ENCODE measurements at regions of chr16 and their contacts with region 1.

Region 1: DNA sequence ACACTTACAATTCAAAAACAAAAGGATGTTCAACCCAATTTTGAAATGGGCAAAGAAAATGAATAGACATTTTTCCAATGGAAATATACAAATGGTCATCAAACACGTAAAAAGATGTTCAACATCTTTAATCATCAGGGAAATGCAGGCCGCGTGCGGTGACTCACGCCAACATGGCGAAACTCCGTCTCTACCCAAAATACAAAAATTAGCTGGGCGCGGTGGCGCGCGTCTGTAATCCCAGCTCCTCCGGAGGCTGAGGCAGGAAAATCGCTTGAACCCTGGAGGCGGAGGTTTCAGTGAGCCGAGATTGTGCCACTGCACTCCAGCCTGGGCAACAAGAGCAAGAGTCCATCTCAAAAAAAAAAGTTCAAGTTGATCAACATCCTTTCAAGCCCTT is 1.8 kb upstream of the CLUAP1 start:
- DNase-seq: no peak
- ATAC-seq: no peak

Region 2: DNA sequence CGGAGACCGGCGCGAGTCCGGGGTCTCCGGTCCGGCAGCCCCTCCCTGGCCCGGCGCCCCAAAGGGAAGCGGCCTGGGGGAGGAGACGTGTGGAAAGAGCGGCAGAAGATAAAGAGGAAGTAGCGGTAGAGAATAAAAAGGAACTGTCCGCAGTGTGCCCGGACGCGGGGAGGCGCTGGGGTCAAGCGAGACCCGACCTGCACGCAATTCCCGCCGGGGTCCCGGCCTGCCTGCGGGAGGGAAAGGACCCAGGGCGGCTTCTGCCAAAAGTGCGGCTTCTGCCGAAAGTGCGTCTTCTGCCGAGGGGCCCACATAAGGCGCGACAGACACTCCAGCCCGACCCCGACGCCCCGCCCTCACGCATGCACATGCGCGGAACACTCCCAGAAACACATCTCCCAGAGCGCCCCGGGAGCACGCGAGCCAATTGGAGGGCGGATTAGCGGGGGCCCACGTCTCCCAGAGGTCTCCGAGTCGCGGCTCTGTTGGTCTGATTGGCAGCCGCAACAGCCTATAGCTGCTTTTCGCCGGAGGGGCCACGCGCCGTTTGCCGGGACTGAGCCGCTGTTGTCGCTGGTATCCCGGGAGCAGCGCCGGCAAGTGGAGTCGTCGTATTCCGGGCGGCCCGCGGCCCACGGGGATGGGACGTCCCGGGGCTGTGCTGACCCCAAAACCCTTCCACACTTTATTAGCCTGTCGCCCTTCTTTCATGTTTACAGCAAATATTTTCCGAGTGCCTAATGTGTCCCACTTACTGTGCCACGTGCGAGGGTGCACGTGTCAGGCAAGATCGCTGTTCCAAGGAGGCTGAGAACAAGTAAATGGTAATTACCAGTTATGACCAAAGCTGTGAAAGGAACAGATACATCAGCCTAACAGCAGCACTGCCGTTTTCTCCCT is 234.6 kb before region 1 on chr16:
- intact Hi-C with region 1: loop called in 1 of 2 experiments (anchors 5 kb)
- DNase-seq: peak; percentile 98
- ATAC-seq: peak; percentile 97 to 98